ENCODE measurements at regions of chr16 and their contacts with region 1.

Region 1: GRCh38 chr16:3879887-3880564 is 487 bp downstream of the CREBBP start:
- DNase-seq: peak; percentile 80
- ATAC-seq: peak; percentile 54
- H3K4me3 Mint-ChIP-seq: peak overlapping the region; percentile 84
- H3K27ac Mint-ChIP-seq: no peak overlapping the region
- H3K4me1 Mint-ChIP-seq: peaks cover 39% of the 10 kb centered on the region
- H3K27me3 Mint-ChIP-seq: peaks cover 2% of the 10 kb centered on the region
- CTCF ChIP-seq: no peak

Region 2: DNA sequence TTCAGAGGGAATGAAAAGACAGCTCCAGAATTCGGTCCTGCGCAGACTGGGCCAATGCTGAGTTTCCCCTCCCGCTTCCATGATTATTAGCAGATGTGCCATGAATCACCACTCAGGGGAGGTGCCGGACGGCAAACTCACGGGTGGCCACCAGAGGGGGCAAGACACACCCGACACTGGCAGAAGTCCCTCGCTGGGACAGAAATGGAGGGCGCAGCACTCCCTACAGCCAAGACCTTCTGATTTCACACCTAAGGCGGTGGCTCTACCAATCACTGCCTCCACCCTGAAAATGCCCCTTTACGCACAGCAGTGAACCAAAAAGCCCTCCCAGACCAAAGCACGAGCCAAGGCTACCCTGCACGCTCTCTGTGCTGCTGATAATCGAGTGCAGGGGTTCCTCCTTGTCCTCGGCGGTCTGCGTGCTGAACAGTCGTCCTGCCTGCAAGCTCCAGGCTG is 189.5 kb before region 1 on chr16:
- CTCF ChIA-PET with region 1: interaction called, 6 read pairs
- POLR2A ChIA-PET with region 1: interaction called, 6 read pairs
- intact Hi-C with region 1: loop called (anchors 10 kb)
- DNase-seq: peak; percentile 91
- ATAC-seq: peak; percentile 98
- H3K4me3 Mint-ChIP-seq: no peak overlapping the region
- H3K27ac Mint-ChIP-seq: no peak overlapping the region
- H3K4me1 Mint-ChIP-seq: peaks cover 18% of the 10 kb centered on the region
- H3K27me3 Mint-ChIP-seq: no peaks in the 10 kb centered on the region
- CTCF ChIP-seq: peak; percentile 88

Region 3: GRCh38 chr16:3861808-3862451 is 18.1 kb before region 1 on chr16:
- CTCF ChIA-PET with region 1: interaction called, 18 read pairs
- POLR2A ChIA-PET with region 1: interaction called, 7 read pairs
- intact Hi-C with region 1: no loop called
- DNase-seq: peak; percentile 34
- ATAC-seq: peak; percentile 72
- H3K4me3 Mint-ChIP-seq: no peak overlapping the region
- H3K27ac Mint-ChIP-seq: peak overlapping the region; percentile 34
- H3K4me1 Mint-ChIP-seq: peaks cover 84% of the 10 kb centered on the region
- H3K27me3 Mint-ChIP-seq: no peaks in the 10 kb centered on the region
- CTCF ChIP-seq: no peak

Region 4: DNA sequence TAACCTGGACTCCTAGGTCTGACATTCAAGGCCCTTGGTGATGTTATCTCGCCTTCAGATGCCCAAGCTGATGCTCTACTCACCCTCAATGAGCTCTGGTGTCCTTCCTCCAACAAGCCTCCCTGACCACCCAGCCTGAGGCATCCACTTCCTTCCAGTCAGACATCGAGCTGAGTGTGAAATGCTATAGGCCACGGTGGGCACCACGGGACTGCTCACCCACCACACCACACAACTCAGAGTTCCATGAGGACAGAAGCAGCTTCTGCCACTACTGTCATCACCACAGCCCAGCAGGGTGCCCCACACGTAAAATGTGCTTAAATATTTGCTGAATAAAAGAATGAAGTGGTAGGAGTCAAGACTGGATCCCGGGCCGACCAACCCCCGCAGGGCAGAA is 11.5 kb before region 1 on chr16:
- CTCF ChIA-PET with region 1: interaction called, 18 read pairs
- POLR2A ChIA-PET with region 1: interaction called, 7 read pairs
- intact Hi-C with region 1: no loop called
- DNase-seq: no peak
- ATAC-seq: no peak
- H3K4me3 Mint-ChIP-seq: no peak overlapping the region
- H3K27ac Mint-ChIP-seq: peak overlapping the region; percentile 56
- H3K4me1 Mint-ChIP-seq: peaks cover 91% of the 10 kb centered on the region
- H3K27me3 Mint-ChIP-seq: no peaks in the 10 kb centered on the region
- CTCF ChIP-seq: no peak